ENCODE measurements at regions of chr17 and their contacts with region 1.

Region 1: DNA sequence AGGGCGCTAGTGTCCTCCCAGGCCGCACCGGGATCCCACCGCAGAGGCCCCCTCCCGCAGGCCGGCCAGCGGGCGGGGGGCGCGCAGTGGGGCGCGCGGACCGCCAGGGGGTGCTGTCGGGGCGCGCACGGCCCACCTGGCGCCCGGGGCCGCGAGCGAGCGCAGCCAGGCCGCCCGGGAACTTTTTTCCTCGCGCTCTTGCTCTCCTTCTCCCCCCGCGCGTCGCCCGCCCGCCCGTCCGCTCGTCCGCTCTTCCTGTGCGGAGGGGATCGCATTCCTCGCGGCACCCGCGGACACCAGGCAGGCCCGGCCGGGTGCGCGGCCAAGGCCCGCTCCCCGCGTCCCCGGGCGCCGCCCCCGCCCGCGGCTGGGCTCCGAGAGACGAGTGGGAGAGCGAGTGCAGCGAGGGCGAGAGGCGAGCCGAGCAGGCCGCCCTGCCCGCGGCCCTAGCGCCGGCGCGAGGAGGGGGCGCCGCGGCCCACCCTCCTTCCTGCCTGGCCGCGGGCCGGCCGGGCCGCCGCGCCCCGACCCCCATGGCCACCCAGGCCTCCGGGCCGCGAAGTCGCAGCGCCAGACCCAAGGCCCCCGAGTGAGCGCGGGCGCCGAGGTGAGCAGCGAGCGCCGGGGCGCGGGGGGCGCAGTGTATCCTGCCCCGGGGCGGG is at the start of gene RAI1:
- DNase-seq: peak; percentile 64
- H3K4me3 Mint-ChIP-seq: peak within 1 kb of the TSS; percentile 89
- H3K27ac Mint-ChIP-seq: peak within 1 kb of the TSS; percentile 84
- H3K4me1 Mint-ChIP-seq: peaks cover 22% of the 10 kb centered on the region
- H3K27me3 Mint-ChIP-seq: peaks cover 10% of the 10 kb centered on the region
- total RNA-seq, gene RAI1: 31.1 and 32.3 TPM in 2 replicates

Region 2: DNA sequence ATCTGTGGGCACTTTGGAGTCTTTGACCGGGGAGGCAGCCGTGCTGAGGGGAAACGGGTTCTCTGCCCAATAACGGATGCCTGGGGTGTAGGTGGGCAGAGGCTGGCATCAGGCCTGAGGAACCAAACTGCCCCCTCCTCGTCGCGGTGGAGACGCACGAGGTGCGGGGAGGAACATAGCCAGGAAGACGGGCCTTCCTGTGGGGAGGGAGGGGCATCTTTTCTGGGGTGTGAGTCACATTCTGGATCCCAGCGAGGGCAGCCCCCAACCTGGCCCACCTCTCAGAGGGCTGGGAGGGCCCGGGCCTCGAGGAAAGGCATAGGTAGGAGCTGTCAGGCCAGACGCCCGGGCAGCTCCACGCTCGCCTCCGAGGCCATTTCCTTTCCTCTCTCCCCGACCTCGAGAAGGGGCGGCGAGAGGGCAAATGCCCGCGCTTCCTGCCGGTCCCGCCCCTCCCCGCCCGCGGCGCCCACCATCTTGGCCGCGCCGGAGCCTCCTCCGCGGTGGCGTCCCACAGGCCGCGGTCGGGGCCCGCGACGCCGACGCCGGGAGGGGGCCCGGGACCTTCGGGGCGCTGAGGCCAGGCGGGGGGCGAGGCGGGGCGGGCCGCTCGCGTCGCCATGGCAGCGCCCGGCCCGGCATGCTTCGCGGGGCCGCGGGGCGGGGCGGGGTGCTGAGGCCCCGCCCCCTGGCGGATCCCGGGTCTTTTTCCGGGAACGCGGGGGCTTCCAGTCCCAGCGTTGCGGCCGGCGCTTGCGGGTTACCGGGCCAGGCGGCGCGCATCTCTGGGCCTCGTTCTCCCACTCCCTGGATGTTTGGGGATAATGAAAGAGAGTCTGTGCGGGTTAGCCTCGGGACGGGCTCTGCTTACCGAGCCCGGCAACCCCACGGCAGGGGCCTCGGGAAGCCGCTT is 13.1 kb after region 1 on chr17:
- intact Hi-C with region 1: loop called (anchors 1 kb)
- DNase-seq: peak; percentile 72
- H3K4me3 Mint-ChIP-seq: peak overlapping the region; percentile 88
- H3K27ac Mint-ChIP-seq: peak overlapping the region; percentile 94
- H3K4me1 Mint-ChIP-seq: peaks cover 73% of the 10 kb centered on the region
- H3K27me3 Mint-ChIP-seq: no peaks in the 10 kb centered on the region

Region 3: DNA sequence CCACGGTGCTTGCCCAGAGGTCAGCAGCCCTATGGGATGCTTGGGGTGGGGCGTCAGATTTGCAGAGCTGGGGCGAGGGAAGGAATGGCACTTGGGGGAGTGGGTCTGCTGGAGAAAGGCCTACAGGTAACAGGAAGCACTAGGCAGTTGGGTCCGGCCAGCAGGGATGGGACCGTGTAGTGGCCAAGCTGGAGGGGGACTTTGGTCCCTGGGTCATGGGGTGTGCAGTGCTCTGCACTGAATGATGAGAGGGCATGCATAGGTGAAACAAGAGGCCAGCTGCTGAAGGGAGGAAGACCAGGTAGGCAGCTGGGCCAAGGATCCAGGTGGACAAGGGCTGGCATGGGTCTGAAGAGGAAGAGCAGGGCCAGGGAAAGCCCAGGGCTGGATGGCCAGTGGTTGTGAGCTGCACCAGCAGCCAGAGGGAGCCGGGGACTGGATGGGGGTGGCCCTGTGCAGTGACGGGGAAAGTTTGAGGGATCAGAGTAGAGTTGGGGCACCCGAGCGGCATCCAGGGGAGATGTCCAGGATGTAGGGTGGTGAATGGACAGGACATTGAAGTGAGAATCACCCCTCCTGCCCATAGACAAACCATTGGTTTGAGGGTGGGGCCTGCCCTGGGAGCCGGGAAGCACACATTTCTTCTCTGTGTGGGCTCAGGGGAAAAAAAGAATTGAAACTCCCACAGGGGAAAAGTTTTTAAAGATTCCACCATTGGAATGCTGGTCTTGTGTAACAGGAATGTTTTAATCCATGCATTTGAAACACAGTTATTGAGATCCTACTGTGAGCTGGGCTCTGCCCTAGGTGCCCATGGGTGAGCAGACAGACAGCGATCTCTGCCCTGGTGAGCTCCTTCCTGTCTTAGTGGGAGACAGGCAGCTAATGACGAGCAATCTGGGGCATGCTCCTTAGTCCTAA is 25.1 kb after region 1 on chr17:
- intact Hi-C with region 1: no loop called
- DNase-seq: no peak
- H3K4me3 Mint-ChIP-seq: no peak overlapping the region
- H3K27ac Mint-ChIP-seq: no peak overlapping the region
- H3K4me1 Mint-ChIP-seq: no peaks in the 10 kb centered on the region
- H3K27me3 Mint-ChIP-seq: no peaks in the 10 kb centered on the region

Region 4: DNA sequence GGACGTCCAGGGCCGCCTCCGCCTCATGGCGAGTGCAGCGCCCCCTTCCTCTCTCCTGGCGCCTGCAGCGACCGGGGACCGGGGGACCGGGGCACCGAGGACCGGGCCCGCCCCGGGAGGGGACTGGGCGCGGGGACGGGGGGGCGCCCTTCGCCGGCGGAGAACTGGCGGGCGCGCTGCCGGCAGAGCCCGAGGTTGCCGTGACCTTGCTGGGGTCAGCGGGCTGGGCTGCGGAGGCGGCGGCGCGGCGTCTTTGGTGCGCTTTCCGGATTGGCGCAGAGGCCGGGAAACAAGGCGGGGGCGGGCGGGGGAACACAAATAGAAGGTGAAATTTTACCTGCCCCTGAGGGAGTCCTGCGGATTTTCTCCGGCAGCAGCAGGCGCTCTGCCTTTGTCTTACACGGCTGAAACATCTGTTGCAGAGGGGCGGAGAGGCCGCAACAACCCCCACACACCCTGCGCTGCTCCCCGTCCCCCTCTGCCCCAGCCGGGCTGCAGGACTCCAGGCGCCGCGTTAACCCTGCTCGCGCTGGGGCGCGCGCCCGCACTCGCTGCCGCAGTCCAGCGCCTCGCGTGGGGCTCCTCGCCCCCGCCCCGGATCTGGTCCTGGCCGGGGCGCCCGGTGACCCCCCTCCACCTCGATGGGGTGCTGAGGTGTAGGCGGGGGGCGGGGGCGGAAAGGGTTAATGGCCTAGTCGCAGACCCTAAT is 102.0 kb after region 1 on chr17:
- intact Hi-C with region 1: loop called (anchors 2 kb)
- DNase-seq: peak; percentile 47
- H3K4me3 Mint-ChIP-seq: peak overlapping the region; percentile 76
- H3K27ac Mint-ChIP-seq: no peak overlapping the region
- H3K4me1 Mint-ChIP-seq: no peaks in the 10 kb centered on the region
- H3K27me3 Mint-ChIP-seq: peaks cover 9% of the 10 kb centered on the region

Region 5: GRCh38 chr17:17805575-17805974 is 124.3 kb after region 1 on chr17:
- intact Hi-C with region 1: no loop called
- DNase-seq: no peak
- H3K4me3 Mint-ChIP-seq: no peak overlapping the region
- H3K27ac Mint-ChIP-seq: peak overlapping the region; percentile 52
- H3K4me1 Mint-ChIP-seq: peaks cover 5% of the 10 kb centered on the region
- H3K27me3 Mint-ChIP-seq: no peaks in the 10 kb centered on the region

Region 6: GRCh38 chr17:17823433-17824118 is 142.3 kb after region 1 on chr17:
- intact Hi-C with region 1: loop called (anchors 1 kb)
- DNase-seq: peak; percentile 82
- H3K4me3 Mint-ChIP-seq: peak overlapping the region; percentile 80
- H3K27ac Mint-ChIP-seq: peak overlapping the region; percentile 91
- H3K4me1 Mint-ChIP-seq: peaks cover 92% of the 10 kb centered on the region
- H3K27me3 Mint-ChIP-seq: no peaks in the 10 kb centered on the region

Region 7: GRCh38 chr17:18033442-18034099 is 352.3 kb after region 1 on chr17:
- intact Hi-C with region 1: loop called (anchors 1 kb)
- DNase-seq: peak; percentile 57
- H3K4me3 Mint-ChIP-seq: no peak overlapping the region
- H3K27ac Mint-ChIP-seq: peak overlapping the region; percentile 21
- H3K4me1 Mint-ChIP-seq: peaks cover 38% of the 10 kb centered on the region
- H3K27me3 Mint-ChIP-seq: no peaks in the 10 kb centered on the region

Measured in activated T-helper 1 cell treated with anti-CD3 and anti-CD28 coated beads, Interleukin-12 subunit alpha, Interleukin-12 subunit beta, Interleukin-2, Interleukin-4 antibody, amounts not matched to agents 30 ng/mL and 10 ng/mL and 1 ng/mL, durations not matched to agents 14 hours and 24 hours and 36 hours (primary cell).